Activated CD4-positive, alpha-beta memory T cell treated with anti-CD3 and anti-CD28 coated beads, Interleukin-2, amount 10 ng/mL, durations not matched to agents 7 days and 5 days (primary cell): ENCODE measurements at regions of chr15 and their contacts with region 1.

Region 1: DNA sequence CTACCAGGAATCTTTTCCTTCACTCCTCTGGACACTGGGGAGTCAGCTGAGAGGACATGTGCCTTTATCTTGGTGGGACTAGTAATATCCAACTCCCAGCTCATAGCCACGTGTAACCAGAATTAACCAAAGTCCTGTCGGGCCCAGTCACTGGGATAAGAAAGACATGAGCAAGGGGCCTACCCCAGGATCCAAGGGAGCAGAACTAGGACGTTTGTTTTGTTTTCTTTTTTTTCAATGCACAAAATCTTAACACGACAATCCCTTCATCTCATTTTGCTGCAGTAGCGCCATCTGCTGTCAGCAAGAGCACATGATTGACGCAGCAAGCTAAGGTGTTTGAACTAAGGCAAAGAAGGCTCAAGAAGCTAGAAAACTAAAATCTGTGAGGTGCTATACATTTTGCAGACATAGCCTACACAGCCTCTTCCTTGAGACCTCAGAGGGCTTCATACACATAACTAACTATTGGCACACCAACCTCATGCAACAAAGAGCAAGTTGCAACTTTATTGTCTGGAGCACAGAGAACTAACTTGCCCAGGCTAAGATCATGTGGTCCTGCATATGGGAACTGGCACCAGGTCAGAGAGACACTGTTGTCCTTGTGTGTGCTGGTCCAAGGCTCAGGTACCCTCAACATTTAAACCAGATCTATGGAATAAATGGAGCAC is 43.6 kb downstream of the RLBP1 start:
- DNase-seq: peak; percentile 72
- H3K4me3 Mint-ChIP-seq: no peak overlapping the region
- H3K27ac Mint-ChIP-seq: no peak overlapping the region
- H3K4me1 Mint-ChIP-seq: peaks cover 17% of the 10 kb centered on the region
- H3K27me3 Mint-ChIP-seq: no peaks in the 10 kb centered on the region

Region 2: GRCh38 chr15:89187976-89188514 is 10.3 kb after region 1 on chr15:
- CTCF ChIA-PET with region 1: interaction called, 12 read pairs
- POLR2A ChIA-PET with region 1: no interaction called
- DNase-seq: no peak
- H3K4me3 Mint-ChIP-seq: no peak overlapping the region
- H3K27ac Mint-ChIP-seq: no peak overlapping the region
- H3K4me1 Mint-ChIP-seq: peaks cover 12% of the 10 kb centered on the region
- H3K27me3 Mint-ChIP-seq: no peaks in the 10 kb centered on the region

Region 3: GRCh38 chr15:89197503-89197971 is 19.8 kb after region 1 on chr15:
- CTCF ChIA-PET with region 1: interaction called, 13 read pairs
- POLR2A ChIA-PET with region 1: no interaction called
- DNase-seq: no peak
- H3K4me3 Mint-ChIP-seq: no peak overlapping the region
- H3K27ac Mint-ChIP-seq: peak overlapping the region; percentile 20
- H3K4me1 Mint-ChIP-seq: peaks cover 25% of the 10 kb centered on the region
- H3K27me3 Mint-ChIP-seq: no peaks in the 10 kb centered on the region